ENCODE measurements at regions of chr22 and their contacts with region 1.

Region 1: GRCh38 chr22:43826142-43827002 is 14.3 kb upstream of the EFCAB6 start:
- DNase-seq: peak; percentile 53
- ATAC-seq: peak; percentile 6
- H3K4me3 ChIP-seq: no peak overlapping the region
- H3K27ac ChIP-seq: no peak overlapping the region
- H3K4me1 ChIP-seq: peaks cover 3% of the 10 kb centered on the region
- H3K27me3 ChIP-seq: no peaks in the 10 kb centered on the region
- CTCF ChIP-seq: peak; percentile 34

Region 2: DNA sequence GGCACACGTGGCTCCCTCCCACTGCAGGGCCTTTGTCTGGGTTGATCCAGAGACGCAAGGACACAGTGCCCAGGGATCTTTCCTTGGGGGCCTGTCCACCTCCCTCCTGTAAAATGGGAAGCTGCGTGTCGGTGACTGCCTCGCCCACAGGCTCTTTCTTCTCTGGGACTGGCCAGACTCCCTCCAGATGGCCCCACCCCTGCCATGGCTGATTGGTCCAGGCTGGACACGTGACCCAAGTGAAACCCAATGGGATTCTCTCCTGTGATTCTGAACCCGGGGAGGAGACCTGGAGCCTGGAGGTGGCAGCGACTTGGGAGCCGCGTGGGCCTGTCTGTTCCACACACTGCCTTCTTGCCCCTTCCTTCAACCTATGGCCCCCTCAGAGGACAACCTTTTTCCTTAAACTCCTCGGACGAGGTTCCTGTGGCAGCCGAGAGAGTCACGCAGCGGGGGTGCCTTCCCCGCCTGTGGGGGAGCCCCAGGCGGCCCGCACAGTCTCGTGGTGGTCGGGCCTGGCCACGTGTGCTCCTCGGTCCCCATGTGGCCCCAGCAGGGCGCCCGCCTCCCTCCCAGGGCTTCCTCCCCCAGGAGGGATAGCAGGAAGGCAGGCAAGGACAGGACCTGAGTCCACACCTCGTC is 426.9 kb before region 1 on chr22:
- intact Hi-C with region 1: loop called (anchors 10 kb)
- DNase-seq: no peak
- ATAC-seq: no peak
- H3K4me3 ChIP-seq: no peak overlapping the region
- H3K27ac ChIP-seq: no peak overlapping the region
- H3K4me1 ChIP-seq: no peaks in the 10 kb centered on the region
- H3K27me3 ChIP-seq: peaks cover 23% of the 10 kb centered on the region
- CTCF ChIP-seq: no peak

Region 3: GRCh38 chr22:43789452-43789851 is 36.9 kb before region 1 on chr22:
- intact Hi-C with region 1: no loop called
- DNase-seq: no peak
- ATAC-seq: peak; percentile 58
- H3K4me3 ChIP-seq: no peak overlapping the region
- H3K27ac ChIP-seq: no peak overlapping the region
- H3K4me1 ChIP-seq: no peaks in the 10 kb centered on the region
- H3K27me3 ChIP-seq: no peaks in the 10 kb centered on the region
- CTCF ChIP-seq: no peak